ENCODE measurements at regions of chr9 and their contacts with region 1.

Region 1: GRCh38 chr9:1009101-1009707 is 32.7 kb downstream of the DMRT3 start:
- DNase-seq: peak; percentile 62
- H3K4me3 Mint-ChIP-seq: no peak overlapping the region
- H3K27ac Mint-ChIP-seq: no peak overlapping the region
- H3K4me1 Mint-ChIP-seq: peaks cover 11% of the 10 kb centered on the region
- H3K27me3 Mint-ChIP-seq: peaks cover 2% of the 10 kb centered on the region

Region 2: DNA sequence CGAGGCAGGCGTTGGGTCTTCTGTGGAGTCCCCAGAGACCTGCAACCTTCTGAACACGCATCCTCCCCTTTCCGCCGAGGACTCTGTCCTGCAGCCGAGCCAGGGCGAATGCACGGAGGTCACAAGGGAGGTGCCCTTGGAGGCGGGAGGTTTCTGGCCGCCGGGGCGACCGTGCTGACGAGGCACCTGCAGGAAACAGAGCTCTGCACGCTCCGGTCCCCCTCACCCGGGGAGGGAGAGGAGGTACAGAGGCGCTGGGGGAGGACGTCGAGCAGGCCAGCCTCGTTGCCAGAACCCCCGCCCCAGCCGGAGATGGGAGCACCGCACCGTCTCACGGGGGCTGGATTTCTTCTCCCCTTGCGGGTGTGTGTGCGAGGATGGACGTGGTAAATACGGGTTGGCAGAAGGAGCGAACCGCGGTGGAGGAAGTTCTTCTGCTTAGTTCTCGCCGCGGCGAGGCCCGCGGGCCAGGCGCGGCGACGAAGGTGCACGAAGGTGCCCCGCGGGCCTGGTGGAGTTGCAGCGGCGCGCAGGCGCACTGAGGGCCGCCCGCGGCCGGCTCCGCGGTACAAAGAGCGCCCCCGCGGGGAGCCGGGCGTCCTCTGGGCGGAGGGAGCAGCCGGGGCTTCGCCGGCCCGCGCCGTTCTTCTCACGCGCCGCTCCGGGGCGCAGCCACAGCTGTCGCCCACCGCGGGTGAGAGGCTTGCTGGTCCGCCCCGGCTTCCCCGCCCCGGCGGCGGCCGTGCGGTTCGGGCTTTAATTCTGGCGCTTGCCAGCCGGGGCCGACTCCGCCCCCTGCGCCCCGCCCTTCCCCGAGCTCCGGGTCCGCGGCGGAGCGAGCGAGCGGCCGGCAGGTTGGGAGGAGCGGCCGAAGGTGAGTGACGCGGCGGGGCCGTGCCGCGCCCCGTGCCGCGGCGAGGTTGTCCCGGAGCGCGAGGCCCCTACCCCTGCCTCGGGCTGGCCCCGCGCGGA is 505.0 kb before region 1 on chr9:
- intact Hi-C with region 1: loop called (anchors 10 kb)
- DNase-seq: peak; percentile 69
- H3K4me3 Mint-ChIP-seq: peak within 1 kb of the TSS; percentile 80
- H3K27ac Mint-ChIP-seq: peak within 1 kb of the TSS; percentile 73
- H3K4me1 Mint-ChIP-seq: no peaks in the 10 kb centered on the region
- H3K27me3 Mint-ChIP-seq: peaks cover 46% of the 10 kb centered on the region

Region 3: DNA sequence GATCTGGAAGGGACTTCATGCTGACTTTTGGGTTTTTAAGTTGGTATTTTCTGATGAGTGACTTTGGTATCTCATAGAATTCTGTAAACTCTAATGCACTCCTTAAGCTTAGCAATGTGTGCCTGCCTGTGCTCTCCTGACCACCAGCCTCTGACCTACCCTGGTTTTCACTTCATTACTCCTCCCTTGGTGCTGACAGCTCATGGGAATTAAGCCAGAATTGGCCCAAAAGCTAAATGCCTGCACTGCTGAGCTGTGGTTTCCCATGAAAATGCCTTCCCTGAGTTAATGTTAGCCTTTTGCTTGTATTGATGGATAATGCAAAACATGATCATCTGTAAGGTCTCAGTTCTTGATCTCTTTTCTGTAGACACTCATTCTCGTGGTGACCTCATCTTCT is 486.5 kb before region 1 on chr9:
- intact Hi-C with region 1: no loop called
- DNase-seq: no peak
- H3K4me3 Mint-ChIP-seq: no peak overlapping the region
- H3K27ac Mint-ChIP-seq: no peak overlapping the region
- H3K4me1 Mint-ChIP-seq: peaks cover 7% of the 10 kb centered on the region
- H3K27me3 Mint-ChIP-seq: peaks cover 2% of the 10 kb centered on the region

Region 4: DNA sequence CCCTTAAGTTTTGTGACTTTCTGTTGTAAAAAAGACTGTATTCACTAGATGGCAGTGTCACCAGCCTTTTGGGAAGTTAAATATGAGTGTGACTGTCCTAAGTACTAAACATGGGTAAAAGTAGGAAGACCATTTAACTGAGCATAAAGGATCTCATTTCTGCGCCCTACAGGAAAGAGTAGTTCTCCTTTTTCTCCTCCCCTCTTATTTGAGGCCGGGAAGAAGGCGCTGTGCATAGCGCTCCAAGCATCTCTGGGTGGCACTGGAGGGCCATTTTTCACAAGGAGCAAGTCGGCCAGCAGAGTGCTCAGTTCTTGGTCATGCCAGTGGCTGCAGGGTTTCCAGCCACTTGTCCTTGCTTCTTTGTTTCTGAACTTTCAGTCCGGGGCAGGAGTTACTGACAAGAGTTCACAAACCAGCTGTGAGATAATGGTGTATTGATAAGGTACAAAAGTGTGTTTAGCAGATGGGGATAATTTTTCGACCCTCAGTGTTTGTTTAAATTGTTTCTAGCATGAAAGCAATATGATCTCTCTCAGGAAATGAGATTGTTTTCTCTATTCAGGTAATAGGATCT is 395.3 kb before region 1 on chr9:
- intact Hi-C with region 1: loop called (anchors 1 kb)
- DNase-seq: no peak
- H3K4me3 Mint-ChIP-seq: no peak overlapping the region
- H3K27ac Mint-ChIP-seq: no peak overlapping the region
- H3K4me1 Mint-ChIP-seq: peaks cover 6% of the 10 kb centered on the region
- H3K27me3 Mint-ChIP-seq: no peaks in the 10 kb centered on the region

Region 5: DNA sequence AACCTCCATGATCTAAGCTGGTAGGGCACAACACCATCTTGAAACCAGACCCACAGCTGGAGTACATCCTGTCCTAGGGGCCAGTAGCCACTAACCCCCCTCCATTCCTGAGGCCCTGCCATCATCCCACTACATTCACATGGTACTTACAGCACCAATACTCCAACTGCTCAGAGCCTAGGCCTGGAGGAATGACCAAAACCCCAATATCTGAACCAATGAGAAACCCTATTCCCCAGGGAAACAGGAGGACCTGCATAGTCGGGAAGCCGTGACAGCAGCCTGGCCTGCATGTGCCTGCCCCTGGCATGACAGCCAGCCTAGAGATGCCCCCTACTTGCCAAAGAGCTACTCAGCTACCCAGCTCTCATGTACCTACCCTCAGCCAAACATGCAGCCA is 233.1 kb before region 1 on chr9:
- intact Hi-C with region 1: no loop called
- DNase-seq: no peak
- H3K4me3 Mint-ChIP-seq: no peak overlapping the region
- H3K27ac Mint-ChIP-seq: no peak overlapping the region
- H3K4me1 Mint-ChIP-seq: no peaks in the 10 kb centered on the region
- H3K27me3 Mint-ChIP-seq: peaks cover 39% of the 10 kb centered on the region

Region 6: DNA sequence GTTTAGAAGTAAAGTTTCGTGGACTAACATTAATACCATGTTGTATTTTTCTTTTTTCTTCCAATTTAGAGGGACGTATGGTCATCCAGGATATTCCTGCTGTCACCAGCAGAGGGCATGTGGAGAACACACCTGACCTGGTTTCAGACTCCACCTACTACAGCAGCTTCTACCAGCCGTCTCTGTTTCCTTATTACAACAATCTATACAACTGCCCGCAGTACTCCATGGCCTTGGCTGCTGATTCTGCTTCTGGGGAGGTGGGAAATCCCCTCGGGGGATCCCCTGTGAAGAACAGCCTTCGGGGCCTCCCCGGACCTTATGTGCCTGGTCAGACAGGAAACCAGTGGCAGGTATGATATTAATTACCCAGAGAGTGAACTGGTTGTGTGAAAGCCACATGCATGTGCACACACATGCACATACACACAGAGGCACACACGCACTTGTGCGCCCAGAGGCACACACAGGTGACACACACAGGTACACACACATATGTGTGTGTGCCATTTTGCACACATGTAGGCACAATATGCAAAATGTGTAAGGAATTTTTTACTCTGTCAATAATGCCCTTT is 115.3 kb before region 1 on chr9:
- intact Hi-C with region 1: loop called (anchors 1 kb)
- DNase-seq: peak; percentile 17
- H3K4me3 Mint-ChIP-seq: no peak overlapping the region
- H3K27ac Mint-ChIP-seq: peak overlapping the region; percentile 1
- H3K4me1 Mint-ChIP-seq: peaks cover 9% of the 10 kb centered on the region
- H3K27me3 Mint-ChIP-seq: peaks cover 15% of the 10 kb centered on the region

Region 7: DNA sequence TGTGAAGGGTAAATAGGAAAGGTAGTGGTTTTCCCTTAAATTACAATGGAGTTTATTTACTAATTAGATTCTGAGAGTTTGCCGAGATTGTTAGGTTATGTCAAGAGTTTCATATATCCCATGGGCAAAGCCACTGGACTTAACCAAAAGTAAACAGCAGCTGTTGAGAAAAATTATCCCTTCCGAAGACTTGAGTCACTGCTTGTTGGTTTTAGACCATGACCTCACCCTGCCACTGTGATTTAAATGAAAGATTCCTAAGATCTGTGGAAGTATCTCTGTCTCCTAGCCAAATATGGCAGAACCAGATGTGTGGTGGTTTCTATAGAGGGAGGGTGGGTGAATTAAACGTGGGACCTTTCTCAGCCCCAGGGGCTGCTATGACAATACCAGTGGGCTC is 13.5 kb before region 1 on chr9:
- intact Hi-C with region 1: no loop called
- DNase-seq: no peak
- H3K4me3 Mint-ChIP-seq: no peak overlapping the region
- H3K27ac Mint-ChIP-seq: no peak overlapping the region
- H3K4me1 Mint-ChIP-seq: peaks cover 6% of the 10 kb centered on the region
- H3K27me3 Mint-ChIP-seq: peaks cover 20% of the 10 kb centered on the region

Region 8: DNA sequence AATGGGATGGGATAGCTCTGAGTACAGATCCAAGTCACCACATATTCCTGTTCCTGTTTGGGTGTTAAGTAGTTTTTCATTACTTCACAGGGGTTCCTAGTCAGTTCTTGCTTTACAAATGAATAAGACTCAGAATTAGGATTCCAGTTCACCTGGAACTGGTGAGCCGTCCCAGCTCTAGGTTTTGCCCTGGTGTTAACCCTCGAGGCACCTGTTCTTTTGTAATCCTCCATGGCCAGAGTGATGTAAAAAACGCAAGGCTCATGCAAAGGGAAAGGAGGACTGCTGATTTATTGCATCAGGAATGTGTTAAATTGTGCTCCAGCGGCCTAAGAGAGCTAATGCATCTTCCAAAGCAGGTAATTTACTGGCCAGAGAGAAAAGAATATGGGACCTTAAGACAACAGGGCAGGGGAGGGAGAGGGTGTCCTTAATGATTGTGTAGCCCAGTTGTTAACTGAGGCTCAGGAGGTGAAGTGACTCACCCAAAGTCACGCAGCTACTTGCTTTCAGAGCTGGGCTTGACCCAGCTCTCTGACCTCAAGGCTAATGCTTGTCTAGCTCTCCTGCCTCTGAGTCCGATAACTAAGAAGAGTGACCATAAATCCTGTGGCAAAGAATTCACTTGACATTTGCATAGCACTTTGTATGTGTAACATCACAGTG is 111.4 kb after region 1 on chr9:
- intact Hi-C with region 1: no loop called
- DNase-seq: no peak
- H3K4me3 Mint-ChIP-seq: no peak overlapping the region
- H3K27ac Mint-ChIP-seq: no peak overlapping the region
- H3K4me1 Mint-ChIP-seq: no peaks in the 10 kb centered on the region
- H3K27me3 Mint-ChIP-seq: peaks cover 2% of the 10 kb centered on the region